H1 (cell line): ENCODE measurements at regions of chr14 and their contacts with region 1.

Region 1: DNA sequence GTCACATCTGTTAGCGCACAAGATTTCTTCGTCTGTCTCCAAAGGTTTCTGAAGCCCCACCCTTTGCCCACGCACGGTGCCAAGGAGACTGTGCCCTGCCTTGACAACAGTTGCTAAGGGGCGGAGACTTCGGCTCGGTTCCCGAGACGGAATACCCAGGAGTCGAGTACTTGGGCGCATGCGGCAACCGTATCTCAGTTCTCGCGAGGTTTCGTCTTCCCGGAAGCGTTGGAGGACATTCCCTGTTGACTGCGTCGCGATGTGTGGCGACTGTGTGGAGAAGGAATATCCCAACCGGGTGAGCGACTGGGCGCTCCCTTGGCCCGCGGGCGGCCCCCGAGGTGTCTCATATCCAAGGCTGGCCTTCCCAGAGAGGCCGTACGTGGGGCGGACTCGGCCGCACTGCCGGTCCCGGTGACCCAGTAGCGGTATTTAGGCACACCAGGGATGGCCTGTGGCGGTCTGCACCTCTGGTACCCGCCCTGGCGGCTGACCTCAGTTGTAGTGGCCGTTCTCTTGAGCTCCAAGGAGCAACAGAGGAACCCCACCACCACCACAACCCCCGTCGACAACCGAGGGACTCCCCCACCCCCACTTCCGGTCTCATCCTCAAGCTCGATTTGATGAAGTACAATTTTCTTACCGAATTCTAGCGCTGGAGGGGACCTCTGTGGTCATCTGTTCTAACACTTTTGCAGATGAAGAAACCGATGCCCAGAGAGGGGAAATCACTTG is at the start of gene CHURC1:
- DNase-seq: peak; percentile 89 to 96
- H3K4me3 ChIP-seq: peak within 1 kb of the TSS; percentile 75 to 90 (median 89)
- H3K27ac ChIP-seq: peak within 1 kb of the TSS; percentile 86
- H3K4me1 ChIP-seq: peaks cover 0 to 4% (median 3%) of the 10 kb centered on the region in 4 experiments; a peak in 4 of 7 replicates
- H3K27me3 ChIP-seq: no peaks in the 10 kb centered on the region
- CTCF ChIP-seq: peak in 1 of 3 experiments; percentile 9; a peak in 1 of 4 replicates
- EP300 ChIP-seq: no peak
- POLR2A ChIP-seq: peak in 1 of 2 experiments; percentile 97; a peak in 2 of 3 replicates
- RAD21 ChIP-seq: 0 out of 4 replicates have a peak, but pooled peaks of 1 of the 2 experiments have one; percentile 4
- total RNA-seq, gene CHURC1: 50.2 and 55.6 TPM in 2 replicates

Region 2: GRCh38 chr14:64899958-64900357 is 14.4 kb before region 1 on chr14:
- CTCF ChIA-PET with region 1: interaction called, 18 read pairs
- POLR2A ChIA-PET with region 1: interaction called, 3 read pairs
- DNase-seq: no peak
- H3K4me3 ChIP-seq: no peak overlapping the region
- H3K27ac ChIP-seq: no peak overlapping the region
- H3K4me1 ChIP-seq: no peaks in the 10 kb centered on the region
- H3K27me3 ChIP-seq: no peaks in the 10 kb centered on the region
- CTCF ChIP-seq: no peak
- EP300 ChIP-seq: no peak
- POLR2A ChIP-seq: no peak
- RAD21 ChIP-seq: no peak

Region 3: DNA sequence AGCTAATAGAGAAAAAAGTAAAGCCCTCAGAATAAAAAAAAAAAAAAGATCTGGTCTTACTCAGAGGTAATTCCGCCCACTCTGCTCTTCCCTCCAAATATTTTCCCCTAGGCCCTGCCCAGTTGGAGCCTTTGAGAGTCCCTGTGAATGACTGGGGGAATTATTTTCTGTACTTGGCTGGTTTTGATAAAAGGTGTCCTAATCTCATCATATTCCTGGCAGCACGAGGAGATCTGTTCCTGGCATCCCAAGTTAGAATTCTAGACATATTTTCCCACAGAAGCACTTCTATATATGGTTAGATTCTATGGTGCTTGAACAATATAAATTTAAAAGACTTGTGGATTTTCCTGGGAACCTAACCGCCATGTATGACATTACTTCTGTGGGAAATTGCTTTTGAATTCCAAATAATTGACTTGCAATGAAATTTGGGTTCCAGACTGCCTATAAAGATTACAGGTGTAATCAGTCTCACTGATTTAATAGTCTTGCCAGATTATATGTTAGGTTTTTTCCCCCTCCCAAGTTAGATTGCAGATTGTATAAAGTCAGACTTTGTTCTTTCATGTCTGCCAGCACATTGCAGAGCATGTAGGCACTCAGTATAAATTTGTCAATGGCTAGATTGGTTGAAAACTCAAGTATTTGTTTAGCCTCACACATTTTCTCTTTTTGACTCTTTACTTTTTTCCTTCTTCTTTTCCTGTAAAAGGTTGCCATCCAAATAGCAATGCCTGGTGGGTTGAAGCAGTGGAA is 15.9 kb after region 1 on chr14:
- CTCF ChIA-PET with region 1: interaction called, 9 read pairs
- POLR2A ChIA-PET with region 1: interaction called, 17 read pairs
- DNase-seq: no peak
- H3K4me3 ChIP-seq: no peak overlapping the region
- H3K27ac ChIP-seq: no peak overlapping the region
- H3K4me1 ChIP-seq: peaks cover 0 to 3% (median 0%) of the 10 kb centered on the region in 4 experiments; a peak in 1 of 7 replicates
- H3K27me3 ChIP-seq: no peaks in the 10 kb centered on the region
- CTCF ChIP-seq: no peak
- EP300 ChIP-seq: no peak
- POLR2A ChIP-seq: no peak
- RAD21 ChIP-seq: no peak

Region 4: GRCh38 chr14:65019944-65020566 is 105.7 kb after region 1 on chr14:
- CTCF ChIA-PET with region 1: no interaction called
- POLR2A ChIA-PET with region 1: no interaction called
- DNase-seq: no peak
- H3K4me3 ChIP-seq: no peak overlapping the region
- H3K27ac ChIP-seq: no peak overlapping the region
- H3K4me1 ChIP-seq: no peaks in the 10 kb centered on the region
- H3K27me3 ChIP-seq: no peaks in the 10 kb centered on the region
- CTCF ChIP-seq: peak in 2 of 3 experiments; percentile 64 to 67; a peak in 3 of 4 replicates
- EP300 ChIP-seq: no peak
- POLR2A ChIP-seq: no peak
- RAD21 ChIP-seq: peak; percentile 49 to 61; a peak in 3 of 4 replicates